ENCODE measurements at regions of chr5 and their contacts with region 1.

Region 1: DNA sequence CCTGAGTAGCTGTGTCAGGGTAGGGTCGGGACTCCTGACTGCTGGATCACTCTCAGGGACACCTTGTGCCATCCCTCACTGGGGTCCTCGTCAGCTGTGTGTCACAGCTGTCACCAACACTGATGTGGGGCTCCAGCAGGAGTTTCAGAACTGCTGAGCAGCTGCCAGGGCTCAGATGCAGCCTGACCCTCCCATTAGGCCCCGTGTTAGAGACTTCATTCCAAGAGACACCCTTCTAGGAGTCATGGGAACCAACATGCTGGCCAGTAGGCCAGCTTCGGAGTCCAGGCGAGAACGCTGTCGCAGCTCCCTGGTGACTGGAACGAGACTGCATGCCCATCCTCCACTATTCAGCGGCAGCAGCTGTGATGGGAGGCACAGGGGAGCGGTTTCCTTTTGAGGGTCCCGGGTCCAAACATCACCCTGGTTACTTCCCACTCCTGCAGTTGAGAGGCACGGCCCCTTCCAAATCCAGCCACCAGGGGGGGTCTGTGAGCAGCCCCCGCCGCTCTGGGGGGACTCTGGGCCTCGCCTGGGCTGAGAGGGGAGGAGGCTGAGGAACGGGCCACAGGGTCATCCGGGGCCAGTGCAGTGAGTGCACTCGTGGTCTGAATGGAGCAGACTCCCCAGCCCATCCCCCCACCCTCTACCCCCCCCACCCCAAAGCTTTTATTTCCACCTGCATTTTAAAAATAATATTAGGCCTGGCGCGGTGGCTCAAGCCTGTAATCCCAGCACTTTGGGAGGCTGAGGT is 12.6 kb upstream of the TCF7 start:
- DNase-seq: no peak
- H3K4me3 ChIP-seq: no peak overlapping the region
- H3K27ac ChIP-seq: no peak overlapping the region
- H3K4me1 ChIP-seq: no peaks in the 10 kb centered on the region
- H3K27me3 ChIP-seq: no peaks in the 10 kb centered on the region
- CTCF ChIP-seq: peak; percentile 70 to 72 (median 70)
- POLR2A ChIP-seq: no peak

Region 2: GRCh38 chr5:134140530-134141201 is 38.8 kb after region 1 on chr5:
- intact Hi-C with region 1: loop called (anchors 5 kb)
- DNase-seq: peak; percentile 83
- H3K4me3 ChIP-seq: no peak overlapping the region
- H3K27ac ChIP-seq: no peak overlapping the region
- H3K4me1 ChIP-seq: no peaks in the 10 kb centered on the region
- H3K27me3 ChIP-seq: no peaks in the 10 kb centered on the region
- CTCF ChIP-seq: peak in 3 of 4 experiments; percentile 64 to 80 (median 77)
- POLR2A ChIP-seq: no peak

Region 3: GRCh38 chr5:134304311-134304710 is 202.4 kb after region 1 on chr5:
- intact Hi-C with region 1: no loop called
- DNase-seq: no peak
- H3K4me3 ChIP-seq: no peak overlapping the region
- H3K27ac ChIP-seq: no peak overlapping the region
- H3K4me1 ChIP-seq: no peaks in the 10 kb centered on the region
- H3K27me3 ChIP-seq: no peaks in the 10 kb centered on the region
- CTCF ChIP-seq: no peak
- POLR2A ChIP-seq: no peak